Heart left ventricle (tissue), 16 donors: ENCODE measurements at regions of chr19 and their contacts with region 1.

Region 1: GRCh38 chr19:7535035-7535992 is at the start of gene PNPLA6:
- DNase-seq: peak; percentile 96 to 98 (median 97)
- ATAC-seq: peak; percentile 78 to 90 (median 86)
- H3K4me3 ChIP-seq: peak within 1 kb of the TSS; percentile 62 to 98 (median 86)
- H3K27ac ChIP-seq: peak within 1 kb of the TSS; percentile 57 to 96 (median 93)
- H3K4me1 ChIP-seq: peaks cover 0 to 25% (median 10%) of the 10 kb centered on the region in 12 donors
- H3K27me3 ChIP-seq: no peaks in the 10 kb centered on the region
- CTCF ChIP-seq: no peak
- POLR2A ChIP-seq: peak in 1 of 2 donors; percentile 68
- total RNA-seq, gene PNPLA6: 41.4 to 105 (median 49.9) TPM

Region 2: GRCh38 chr19:7394731-7395359 is 140.5 kb before region 1 on chr19:
- intact Hi-C with region 1: loop called in 6 of 10 experiments (anchors 1 to 10 kb)
- DNase-seq: peak; percentile 89 to 96 (median 89)
- ATAC-seq: peak; percentile 96 to 100 (median 99)
- H3K4me3 ChIP-seq: peak overlapping the region; percentile 68 to 100 (median 97)
- H3K27ac ChIP-seq: peak overlapping the region in 11 of 12 donors; percentile 24 to 87 (median 81)
- H3K4me1 ChIP-seq: peaks cover 0 to 34% (median 15%) of the 10 kb centered on the region in 12 donors
- H3K27me3 ChIP-seq: no peaks in the 10 kb centered on the region
- CTCF ChIP-seq: peak in 2 of 12 donors; percentile 13 to 17
- POLR2A ChIP-seq: peak in 1 of 2 donors; percentile 77

Region 3: DNA sequence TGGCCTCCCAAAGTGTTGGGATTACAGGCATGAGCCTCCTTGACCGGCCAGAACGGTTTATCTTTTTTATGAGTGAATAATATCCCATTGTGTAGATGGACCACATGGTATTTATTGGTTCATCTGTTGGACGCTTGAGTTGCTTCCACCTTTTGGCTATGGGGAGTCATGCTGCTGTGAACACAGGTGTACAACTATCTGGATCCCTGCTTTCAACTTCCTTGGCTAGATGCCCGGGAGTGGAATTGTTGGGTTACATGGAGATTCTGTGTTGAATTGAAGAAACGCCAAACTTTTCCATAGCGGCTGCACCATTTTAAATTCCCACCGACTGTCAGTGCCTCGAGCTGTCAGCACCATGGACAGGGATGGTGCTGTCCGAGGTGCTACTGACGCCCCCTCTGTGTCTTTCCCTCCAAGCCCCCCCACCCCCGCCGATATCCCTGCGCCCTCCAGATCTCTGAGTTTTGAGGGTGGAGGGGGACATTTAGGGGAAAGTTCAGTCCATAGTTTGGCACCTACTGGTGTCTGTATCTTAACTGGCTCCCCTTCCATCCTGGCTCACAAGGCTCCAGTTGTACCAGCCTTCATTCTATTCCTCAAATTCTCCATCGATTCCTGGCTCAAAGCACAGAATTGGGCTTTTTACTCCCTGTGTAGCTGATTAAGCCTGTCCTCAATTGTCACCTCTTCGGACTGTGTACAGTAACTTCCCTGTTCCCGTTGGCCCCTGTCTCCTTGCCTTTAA is 27.5 kb after region 1 on chr19:
- intact Hi-C with region 1: no loop called
- DNase-seq: no peak
- ATAC-seq: no peak
- H3K4me3 ChIP-seq: no peak overlapping the region
- H3K27ac ChIP-seq: no peak overlapping the region
- H3K4me1 ChIP-seq: no peaks in the 10 kb centered on the region
- H3K27me3 ChIP-seq: no peaks in the 10 kb centered on the region
- CTCF ChIP-seq: no peak
- POLR2A ChIP-seq: no peak